Mucosa of descending colon (tissue), 3 donors: ENCODE measurements at regions of chr7 and their contacts with region 1.

Region 1: GRCh38 chr7:42940985-42941847 is 9.0 kb downstream of the MRPL32 start:
- DNase-seq: peak; percentile 57 to 96 (median 77)
- ATAC-seq: peak; percentile 76
- H3K4me3 ChIP-seq: no peak overlapping the region
- H3K4me1 ChIP-seq: no peaks in the 10 kb centered on the region
- CTCF ChIP-seq: peak; percentile 78

Region 2: GRCh38 chr7:42714356-42714755 is 226.9 kb before region 1 on chr7:
- intact Hi-C with region 1: no loop called
- DNase-seq: no peak
- ATAC-seq: no peak
- H3K4me3 ChIP-seq: no peak overlapping the region
- H3K4me1 ChIP-seq: no peaks in the 10 kb centered on the region
- CTCF ChIP-seq: no peak

Region 3: DNA sequence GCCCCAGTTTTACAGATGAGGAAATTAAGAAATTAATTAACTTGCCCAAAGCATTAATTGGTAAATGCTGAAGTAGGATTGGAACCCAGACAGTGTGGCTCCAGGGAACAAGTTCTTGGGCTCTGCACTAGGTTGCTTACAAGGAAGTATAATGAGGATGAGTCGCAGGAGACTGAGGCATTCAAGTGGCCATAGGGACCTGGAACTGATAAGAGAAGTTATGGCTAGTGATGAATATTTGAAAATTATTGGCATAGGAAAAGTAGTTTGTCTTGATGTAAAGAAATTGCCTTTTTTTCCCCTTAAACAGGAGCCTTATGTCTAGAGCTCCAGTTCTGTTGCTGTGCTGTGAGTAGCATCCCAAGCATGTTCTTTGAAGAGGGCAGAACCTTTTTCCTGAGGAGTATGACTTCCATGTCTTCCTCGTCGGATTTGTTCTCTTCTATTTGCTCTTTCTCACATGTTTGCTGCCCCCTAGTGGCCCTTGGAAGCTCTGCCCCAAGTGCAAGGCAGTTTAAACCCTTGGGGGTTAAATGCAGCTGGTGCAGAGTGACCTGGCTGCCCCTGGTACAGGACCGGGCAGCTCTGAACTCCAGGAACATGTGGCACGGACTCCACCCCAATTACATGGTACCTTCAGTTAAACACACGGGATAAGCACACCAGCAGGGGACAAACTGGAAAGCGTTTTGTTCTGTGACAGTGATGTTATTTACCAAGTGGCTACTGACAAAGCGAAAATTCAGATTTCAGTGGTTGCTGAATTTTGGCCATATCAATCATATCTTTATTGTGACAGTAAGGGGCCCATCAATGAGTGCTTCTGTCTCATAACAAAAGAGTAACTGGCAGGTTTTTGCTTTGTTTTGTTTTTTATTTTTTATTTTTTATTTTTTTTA is 320.0 kb after region 1 on chr7:
- intact Hi-C with region 1: loop called in 1 of 2 experiments (anchors 10 kb)
- DNase-seq: peak in 2 of 3 donors; percentile 69 to 80
- ATAC-seq: peak; percentile 84
- H3K4me3 ChIP-seq: no peak overlapping the region
- H3K4me1 ChIP-seq: no peaks in the 10 kb centered on the region
- CTCF ChIP-seq: peak; percentile 84